ENCODE measurements at regions of chr5 and their contacts with region 1.

Region 1: GRCh38 chr5:141960449-141961202 is 2.6 kb upstream of the PCDH12 start:
- DNase-seq: peak; percentile 78
- ATAC-seq: peak; percentile 95
- H3K4me3 ChIP-seq: no peak overlapping the region
- H3K27ac ChIP-seq: no peak overlapping the region
- H3K4me1 ChIP-seq: 0 out of 2 replicates have a peak, but pooled peaks cover 6% of the 10 kb centered on the region
- H3K27me3 ChIP-seq: no peaks in the 10 kb centered on the region
- CTCF ChIP-seq: peak; percentile 77

Region 2: GRCh38 chr5:141691867-141692532 is 268.6 kb before region 1 on chr5:
- CTCF ChIA-PET with region 1: interaction called, 11 read pairs
- POLR2A ChIA-PET with region 1: no interaction called
- intact Hi-C with region 1: loop called (anchors 1 kb)
- DNase-seq: peak; percentile 85
- ATAC-seq: peak; percentile 86
- H3K4me3 ChIP-seq: peak overlapping the region; percentile 57
- H3K27ac ChIP-seq: no peak overlapping the region
- H3K4me1 ChIP-seq: peaks cover 16% of the 10 kb centered on the region
- H3K27me3 ChIP-seq: no peaks in the 10 kb centered on the region
- CTCF ChIP-seq: peak; percentile 80

Region 3: DNA sequence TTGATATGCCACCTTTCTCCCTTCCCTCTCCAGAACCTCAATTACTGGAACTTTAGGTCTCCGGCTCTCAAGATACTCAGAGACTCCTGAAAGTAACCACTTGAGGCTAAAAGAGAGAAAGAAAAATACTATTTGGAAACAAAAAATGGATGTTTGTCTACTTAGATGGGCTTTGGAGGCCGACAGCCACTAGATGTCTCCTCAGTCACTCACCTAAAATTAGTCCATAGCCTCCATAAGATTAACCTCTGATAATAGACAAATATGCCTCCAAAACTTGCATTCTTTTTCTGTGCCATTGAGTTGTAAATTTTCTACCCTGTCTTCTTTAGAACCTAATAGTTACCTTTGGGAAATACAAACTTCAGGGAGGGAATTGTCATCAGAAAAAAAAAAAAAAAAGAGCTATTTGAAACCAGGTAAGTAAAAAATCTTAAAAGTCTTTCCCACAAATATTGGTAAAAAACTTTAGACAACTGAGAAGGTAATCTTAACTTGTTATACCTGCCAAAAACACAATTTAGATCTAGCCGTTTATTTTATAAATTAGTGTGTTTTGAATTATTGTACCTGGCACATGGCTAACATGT is 71.2 kb before region 1 on chr5:
- CTCF ChIA-PET with region 1: interaction called, 7 read pairs
- POLR2A ChIA-PET with region 1: no interaction called
- intact Hi-C with region 1: loop called (anchors 1 kb)
- DNase-seq: peak; percentile 35
- ATAC-seq: peak; percentile 71
- H3K4me3 ChIP-seq: no peak overlapping the region
- H3K27ac ChIP-seq: no peak overlapping the region
- H3K4me1 ChIP-seq: no peaks in the 10 kb centered on the region
- H3K27me3 ChIP-seq: no peaks in the 10 kb centered on the region
- CTCF ChIP-seq: peak; percentile 63